ENCODE measurements at regions of chr10 and their contacts with region 1.

Region 1: GRCh38 chr10:69172241-69172982 is 7.6 kb upstream of the SUPV3L1 start:
- DNase-seq: no peak
- H3K4me3 ChIP-seq: no peak overlapping the region
- H3K4me3 Mint-ChIP-seq: no peak overlapping the region
- H3K27ac Mint-ChIP-seq: no peak overlapping the region
- H3K4me1 ChIP-seq: no peaks in the 10 kb centered on the region
- H3K4me1 Mint-ChIP-seq: no peaks in the 10 kb centered on the region
- H3K27me3 ChIP-seq: no peaks in the 10 kb centered on the region
- H3K27me3 Mint-ChIP-seq: no peaks in the 10 kb centered on the region
- CTCF ChIP-seq: no peak

Region 2: DNA sequence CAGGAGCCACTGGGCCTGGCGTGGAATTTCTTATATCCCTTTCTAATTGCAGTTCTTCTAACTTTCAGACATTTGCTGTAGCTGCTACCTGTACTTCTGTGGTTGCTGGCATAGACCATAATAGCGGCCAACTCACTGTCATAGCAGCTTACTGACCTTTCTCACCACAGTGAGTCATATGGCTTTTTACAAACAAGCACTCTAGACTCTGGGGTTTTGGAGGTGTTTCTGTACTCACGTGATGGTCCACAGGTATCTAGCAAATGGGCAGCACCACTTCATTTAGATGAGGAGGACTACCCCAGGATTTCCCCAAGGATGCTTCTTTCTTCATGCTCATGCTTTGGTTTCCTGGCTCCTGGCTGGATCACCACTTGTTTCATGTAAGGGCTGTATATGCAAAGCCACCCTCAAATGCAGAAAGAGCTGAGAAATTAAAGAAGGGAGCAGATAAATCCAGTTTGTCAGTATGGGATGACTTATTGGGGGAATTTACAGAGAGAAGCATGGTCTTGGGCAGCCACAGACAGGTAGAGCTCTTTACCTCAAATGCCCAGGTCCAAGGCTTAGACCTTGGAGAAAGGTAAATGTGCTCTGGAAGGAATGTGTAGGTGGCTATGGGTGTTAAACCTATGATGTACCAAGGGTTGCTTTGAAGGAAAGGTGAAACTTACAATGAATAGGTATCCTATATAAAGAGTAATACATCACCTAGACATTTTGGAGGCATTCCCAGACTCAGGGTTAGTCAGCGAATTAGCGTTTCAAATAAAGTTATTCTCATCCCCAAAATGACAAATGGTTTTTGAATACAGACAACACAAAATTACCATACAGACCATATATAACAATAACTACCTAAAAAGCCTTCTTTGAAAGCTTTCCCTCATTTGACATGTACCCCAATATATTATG is 629.2 kb before region 1 on chr10:
- CTCF ChIA-PET with region 1: no interaction called
- POLR2A ChIA-PET with region 1: no interaction called
- intact Hi-C with region 1: loop called (anchors 5 kb)
- DNase-seq: no peak
- H3K4me3 ChIP-seq: no peak overlapping the region
- H3K4me3 Mint-ChIP-seq: no peak overlapping the region
- H3K27ac Mint-ChIP-seq: peak overlapping the region; percentile 48
- H3K4me1 ChIP-seq: peaks cover 17% of the 10 kb centered on the region
- H3K4me1 Mint-ChIP-seq: peaks cover 26% of the 10 kb centered on the region
- H3K27me3 ChIP-seq: no peaks in the 10 kb centered on the region
- H3K27me3 Mint-ChIP-seq: no peaks in the 10 kb centered on the region
- CTCF ChIP-seq: no peak